Activated CD4-positive, alpha-beta T cell treated with anti-CD3 and anti-CD28 coated beads, Interleukin-2, amount 10 ng/mL, durations not matched to agents 24 days and 14 days (primary cell): ENCODE measurements at regions of chr4 and their contacts with region 1.

Region 1: DNA sequence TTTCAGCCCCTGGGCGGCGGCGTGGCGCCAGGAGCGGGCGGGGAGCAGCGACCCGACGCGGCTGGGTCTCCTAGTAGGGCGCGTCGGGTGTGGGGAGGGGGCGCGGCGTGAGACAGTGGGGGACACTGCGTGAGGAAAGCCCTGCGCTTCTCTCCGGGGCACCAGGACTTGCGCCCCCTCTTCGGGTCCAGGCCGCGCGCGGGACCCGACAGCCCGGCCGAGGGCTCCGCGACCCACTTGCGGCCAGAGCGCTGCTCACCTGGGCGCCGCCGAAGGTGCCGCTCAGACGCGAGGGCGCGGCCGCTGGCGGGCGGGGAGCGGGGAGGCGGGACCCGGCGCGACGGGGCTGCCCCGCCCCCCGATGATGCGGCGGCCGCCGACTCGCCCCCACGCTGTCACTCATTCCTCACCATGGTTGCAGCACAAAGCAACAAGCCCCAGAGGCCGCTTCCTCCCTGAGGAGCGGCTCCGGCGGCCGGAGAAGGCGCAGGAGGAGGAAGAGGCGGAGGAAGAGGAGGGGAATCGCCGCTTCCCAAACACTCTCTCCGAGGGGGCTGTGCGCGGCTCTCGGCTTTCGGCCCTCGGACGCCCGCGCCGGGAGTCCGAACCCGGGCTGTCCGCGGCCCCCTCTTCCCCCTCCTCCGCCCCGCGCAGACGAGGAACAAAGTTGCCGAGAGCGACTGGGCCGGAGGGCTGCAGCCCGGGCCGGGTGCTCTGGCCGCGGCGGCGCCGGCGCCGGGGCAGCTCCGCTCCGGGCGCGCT is at the start of gene RAPGEF2:
- DNase-seq: peak; percentile 96
- H3K4me3 Mint-ChIP-seq: peak within 1 kb of the TSS; percentile 81
- H3K27ac Mint-ChIP-seq: peak within 1 kb of the TSS; percentile 87
- H3K4me1 Mint-ChIP-seq: peaks cover 42% of the 10 kb centered on the region
- H3K27me3 Mint-ChIP-seq: peaks cover 2% of the 10 kb centered on the region
- total RNA-seq, gene RAPGEF2: 27.1 and 32.0 TPM in 2 replicates

Region 2: DNA sequence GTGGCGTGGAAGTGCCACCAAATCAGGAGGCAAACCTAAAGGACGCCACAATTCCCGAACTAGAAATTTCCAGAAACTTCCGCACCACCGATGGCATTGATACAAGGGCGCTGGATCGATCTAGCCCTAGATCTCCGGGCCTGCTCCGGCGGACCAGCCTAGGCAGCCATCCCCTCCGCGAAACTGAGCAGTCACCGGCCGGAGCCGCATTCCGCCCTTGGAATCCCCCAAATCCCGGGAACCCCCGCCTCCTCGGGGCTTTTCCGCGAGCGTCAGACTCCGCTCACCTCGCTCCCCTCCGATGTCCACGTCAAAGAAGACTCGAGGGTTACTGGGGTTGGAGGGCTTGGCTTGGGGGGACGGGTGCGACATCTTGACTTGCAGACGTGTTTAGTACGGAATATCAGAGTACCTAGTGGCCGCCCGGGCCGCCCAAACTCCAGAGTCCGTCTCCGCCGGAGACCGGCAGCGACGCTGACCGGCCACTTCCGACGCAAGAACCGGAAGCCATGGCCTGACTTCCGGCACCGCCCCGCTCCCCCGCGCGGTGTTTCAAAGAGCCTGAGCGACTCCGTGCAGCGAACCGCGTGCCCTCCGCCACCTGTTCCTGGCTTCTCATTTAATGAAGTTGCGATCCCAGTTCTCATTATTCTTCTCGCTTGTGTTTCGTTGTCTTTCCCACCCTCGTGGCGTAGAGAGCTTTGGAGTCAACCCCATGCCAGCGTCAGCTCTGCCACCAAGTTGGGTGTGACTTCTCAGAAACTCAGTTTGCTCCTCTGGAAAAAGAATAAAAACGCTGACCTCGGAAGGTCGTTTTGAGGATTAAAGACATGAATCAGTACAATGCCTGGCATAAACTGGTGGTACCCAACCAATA is 379.6 kb before region 1 on chr4 and contains the start of gene PPID:
- intact Hi-C with region 1: loop called (anchors 1 kb)
- DNase-seq: peak; percentile 96
- H3K4me3 Mint-ChIP-seq: peak within 1 kb of the TSS; percentile 95
- H3K27ac Mint-ChIP-seq: peak within 1 kb of the TSS; percentile 99
- H3K4me1 Mint-ChIP-seq: peaks cover 45% of the 10 kb centered on the region
- H3K27me3 Mint-ChIP-seq: no peaks in the 10 kb centered on the region
- total RNA-seq, gene PPID: 62.9 and 64.7 TPM in 2 replicates

Region 3: DNA sequence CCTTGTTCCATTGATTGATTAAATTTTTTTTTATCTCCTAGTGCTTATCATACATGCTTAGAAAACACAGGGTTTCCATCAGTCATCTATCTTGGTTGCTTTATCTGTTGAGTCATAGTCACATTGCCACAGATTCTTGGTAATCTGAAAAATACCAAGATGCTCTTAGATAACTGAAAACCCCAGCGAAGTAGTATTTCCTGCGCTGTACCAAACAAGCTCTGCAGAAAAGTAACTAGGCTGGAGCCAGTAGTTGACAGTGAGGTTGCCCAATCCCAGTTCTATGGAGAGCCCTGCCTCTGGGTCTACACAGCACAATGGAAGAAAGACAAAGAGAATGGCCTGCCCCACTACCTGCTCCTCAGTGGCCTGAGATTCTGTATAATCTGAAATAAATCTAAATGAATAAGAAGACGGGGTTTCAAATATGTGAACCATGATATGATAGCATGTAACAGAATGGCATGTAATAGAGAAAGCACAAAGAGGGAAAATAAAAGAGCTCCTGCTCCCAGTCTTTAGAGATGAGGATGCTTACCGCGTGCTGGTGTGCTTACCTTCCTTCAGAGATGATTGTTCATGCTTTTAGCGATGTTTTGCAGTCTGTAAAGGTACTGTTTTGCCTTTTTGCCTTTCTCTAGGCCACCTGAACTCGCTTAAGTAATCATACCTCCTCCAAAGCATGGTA is 55.2 kb before region 1 on chr4:
- intact Hi-C with region 1: loop called (anchors 2 kb)
- DNase-seq: peak; percentile 78
- H3K4me3 Mint-ChIP-seq: peak overlapping the region; percentile 6
- H3K27ac Mint-ChIP-seq: peak overlapping the region; percentile 62
- H3K4me1 Mint-ChIP-seq: peaks cover 26% of the 10 kb centered on the region
- H3K27me3 Mint-ChIP-seq: peaks cover 6% of the 10 kb centered on the region

Region 4: DNA sequence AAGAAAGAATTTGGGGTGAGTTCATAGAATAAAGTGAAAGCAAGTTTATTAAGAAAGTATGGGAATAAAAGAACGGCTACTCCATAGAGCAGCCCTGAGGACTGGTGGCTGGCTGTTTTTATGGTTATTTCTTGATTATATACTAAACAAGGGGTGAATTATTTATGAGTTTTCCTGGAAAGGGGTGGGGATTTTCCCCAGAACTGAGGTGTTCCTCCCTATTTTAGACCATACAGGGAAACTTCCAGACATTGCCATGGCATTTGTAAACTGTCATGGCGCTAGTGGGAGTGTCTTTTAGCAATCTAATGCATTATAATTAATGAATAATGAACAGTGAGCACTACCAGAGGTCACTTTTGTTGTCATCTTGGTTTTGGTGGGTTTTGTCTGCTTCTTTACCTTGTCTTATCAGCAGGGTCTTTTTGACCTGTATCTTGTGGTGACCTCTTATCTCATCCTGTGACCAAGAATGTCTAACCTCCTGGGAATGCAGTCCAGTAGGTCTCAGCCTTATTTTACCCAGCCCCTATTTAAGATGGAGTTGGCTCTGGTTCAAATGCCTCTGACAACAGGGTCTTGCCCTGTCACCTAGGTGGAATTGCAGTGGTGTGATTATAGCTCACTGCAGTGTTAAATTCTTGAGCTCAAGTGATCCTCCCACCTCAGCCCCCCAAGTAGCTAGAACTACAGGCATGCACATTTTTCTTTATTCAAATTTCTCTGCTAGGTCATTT is 27.2 kb after region 1 on chr4:
- intact Hi-C with region 1: loop called (anchors 2 kb)
- DNase-seq: no peak
- H3K4me3 Mint-ChIP-seq: no peak overlapping the region
- H3K27ac Mint-ChIP-seq: no peak overlapping the region
- H3K4me1 Mint-ChIP-seq: peaks cover 21% of the 10 kb centered on the region
- H3K27me3 Mint-ChIP-seq: no peaks in the 10 kb centered on the region

Region 5: DNA sequence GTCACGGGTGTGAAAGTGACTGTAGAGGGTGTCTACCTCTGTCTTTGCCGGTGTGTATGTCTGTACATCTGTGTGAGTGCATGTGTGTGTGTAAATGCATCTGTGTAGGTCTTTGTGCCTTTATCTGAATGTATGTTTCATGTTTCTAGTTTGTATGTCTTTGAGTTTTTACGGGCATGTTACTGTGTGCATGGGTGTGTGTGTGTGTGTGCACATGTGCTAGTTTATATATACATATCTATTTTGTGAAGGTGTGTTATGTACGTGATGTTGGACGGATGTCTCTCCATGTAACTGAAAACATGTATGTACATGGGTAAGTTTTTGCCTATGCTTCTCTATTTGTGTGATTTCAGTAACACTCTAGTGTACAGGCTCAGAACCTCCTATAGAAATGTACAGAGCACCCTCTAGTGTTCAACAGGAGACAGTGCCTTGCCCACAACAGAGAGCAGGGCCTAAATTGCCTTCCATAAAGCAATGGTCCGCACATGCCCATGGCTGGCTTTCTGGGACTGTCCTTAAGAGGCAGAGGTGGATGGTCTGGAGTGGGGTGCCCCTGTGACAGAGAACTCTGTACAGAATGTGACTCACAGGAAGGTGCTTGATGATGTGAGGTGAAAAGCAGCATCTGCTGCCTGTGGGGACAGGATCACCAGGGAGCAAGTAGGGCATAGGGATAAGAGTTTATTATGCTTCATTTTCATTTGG is 343.6 kb after region 1 on chr4:
- intact Hi-C with region 1: loop called (anchors 5 kb)
- DNase-seq: peak; percentile 75
- H3K4me3 Mint-ChIP-seq: no peak overlapping the region
- H3K27ac Mint-ChIP-seq: no peak overlapping the region
- H3K4me1 Mint-ChIP-seq: no peaks in the 10 kb centered on the region
- H3K27me3 Mint-ChIP-seq: peaks cover 5% of the 10 kb centered on the region